ENCODE measurements at regions of chr1 and their contacts with region 1.

Region 1: GRCh38 chr1:145891587-145892485 is 6.2 kb upstream of the ANKRD35 start:
- DNase-seq: peak; percentile 62
- ATAC-seq: peak; percentile 78
- H3K4me3 Mint-ChIP-seq: no peak overlapping the region
- H3K27ac Mint-ChIP-seq: peak overlapping the region; percentile 40
- H3K4me1 Mint-ChIP-seq: peaks cover 1% of the 10 kb centered on the region
- H3K27me3 Mint-ChIP-seq: no peaks in the 10 kb centered on the region

Region 2: DNA sequence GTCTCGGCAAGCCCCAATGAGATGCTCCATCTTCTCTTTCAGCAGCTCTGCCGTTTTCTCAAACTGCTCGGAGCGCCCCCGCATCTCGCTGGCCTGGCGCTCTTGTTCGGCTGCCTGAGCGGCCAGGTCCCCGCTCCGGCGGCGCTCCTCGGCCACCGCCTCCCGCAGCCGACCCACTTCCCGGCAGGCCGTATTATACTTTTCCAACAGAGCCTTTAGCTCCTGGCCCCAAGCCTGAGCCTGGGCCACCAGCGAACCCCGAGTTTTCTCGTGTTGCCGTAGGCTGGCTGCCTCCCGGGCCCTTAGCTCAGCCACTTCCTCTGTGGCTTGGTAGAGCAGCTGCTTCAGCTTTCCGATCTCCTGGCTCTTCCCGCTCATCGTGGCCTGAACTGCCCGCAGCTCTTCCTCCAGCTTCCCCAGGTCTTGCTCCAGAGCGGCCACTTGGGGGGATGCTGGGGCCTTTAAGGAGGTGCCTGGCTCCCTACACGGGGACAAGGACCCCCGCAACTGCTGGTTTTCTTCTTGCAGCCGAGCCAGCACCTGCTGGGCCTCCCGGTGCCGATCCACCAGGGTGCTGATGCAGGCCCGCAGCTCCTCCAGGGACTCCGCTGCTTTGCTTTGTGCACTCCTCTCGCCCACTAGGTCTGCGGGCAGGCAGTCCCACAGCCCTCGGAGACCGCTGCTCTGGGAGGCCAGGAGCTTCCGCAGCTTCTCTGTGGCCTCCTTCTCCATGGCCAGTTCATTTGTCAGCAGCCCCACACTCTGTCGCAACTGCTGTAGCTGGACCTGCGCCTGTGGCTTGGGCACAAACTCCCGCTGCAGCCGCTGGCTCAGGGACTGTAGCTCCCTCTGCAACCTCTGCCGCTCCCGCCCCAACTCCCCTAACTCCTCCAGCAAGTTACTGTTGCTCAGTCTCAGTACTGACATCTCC is 19.6 kb before region 1 on chr1:
- CTCF ChIA-PET with region 1: interaction called, 12 read pairs
- POLR2A ChIA-PET with region 1: no interaction called
- DNase-seq: peak; percentile 59
- ATAC-seq: peak; percentile 92
- H3K4me3 Mint-ChIP-seq: peak overlapping the region; percentile 67
- H3K27ac Mint-ChIP-seq: peak overlapping the region; percentile 81
- H3K4me1 Mint-ChIP-seq: peaks cover 20% of the 10 kb centered on the region
- H3K27me3 Mint-ChIP-seq: peaks cover 17% of the 10 kb centered on the region

Region 3: DNA sequence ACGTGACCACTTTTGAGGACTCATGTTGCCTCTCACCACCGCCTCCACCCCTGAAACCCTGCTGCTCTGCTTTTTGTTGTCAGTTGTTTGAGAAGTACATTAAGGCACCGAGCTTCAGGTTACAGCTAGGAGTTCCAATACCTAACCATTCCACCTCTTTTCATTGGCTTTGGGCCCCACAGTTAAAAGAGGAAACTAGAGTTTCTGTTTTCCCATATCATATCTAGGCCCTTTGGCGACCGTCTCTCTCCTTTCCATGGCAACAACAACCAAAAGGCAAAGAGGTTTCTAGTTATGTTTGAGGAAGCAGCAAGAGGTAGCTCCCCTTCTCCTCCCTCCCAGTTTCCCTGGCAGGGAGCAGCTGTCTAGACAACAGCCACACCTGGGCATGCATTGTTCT is 12.1 kb before region 1 on chr1:
- CTCF ChIA-PET with region 1: interaction called, 22 read pairs
- POLR2A ChIA-PET with region 1: interaction called, 3 read pairs
- DNase-seq: no peak
- ATAC-seq: no peak
- H3K4me3 Mint-ChIP-seq: no peak overlapping the region
- H3K27ac Mint-ChIP-seq: no peak overlapping the region
- H3K4me1 Mint-ChIP-seq: peaks cover 1% of the 10 kb centered on the region
- H3K27me3 Mint-ChIP-seq: peaks cover 32% of the 10 kb centered on the region

Region 4: DNA sequence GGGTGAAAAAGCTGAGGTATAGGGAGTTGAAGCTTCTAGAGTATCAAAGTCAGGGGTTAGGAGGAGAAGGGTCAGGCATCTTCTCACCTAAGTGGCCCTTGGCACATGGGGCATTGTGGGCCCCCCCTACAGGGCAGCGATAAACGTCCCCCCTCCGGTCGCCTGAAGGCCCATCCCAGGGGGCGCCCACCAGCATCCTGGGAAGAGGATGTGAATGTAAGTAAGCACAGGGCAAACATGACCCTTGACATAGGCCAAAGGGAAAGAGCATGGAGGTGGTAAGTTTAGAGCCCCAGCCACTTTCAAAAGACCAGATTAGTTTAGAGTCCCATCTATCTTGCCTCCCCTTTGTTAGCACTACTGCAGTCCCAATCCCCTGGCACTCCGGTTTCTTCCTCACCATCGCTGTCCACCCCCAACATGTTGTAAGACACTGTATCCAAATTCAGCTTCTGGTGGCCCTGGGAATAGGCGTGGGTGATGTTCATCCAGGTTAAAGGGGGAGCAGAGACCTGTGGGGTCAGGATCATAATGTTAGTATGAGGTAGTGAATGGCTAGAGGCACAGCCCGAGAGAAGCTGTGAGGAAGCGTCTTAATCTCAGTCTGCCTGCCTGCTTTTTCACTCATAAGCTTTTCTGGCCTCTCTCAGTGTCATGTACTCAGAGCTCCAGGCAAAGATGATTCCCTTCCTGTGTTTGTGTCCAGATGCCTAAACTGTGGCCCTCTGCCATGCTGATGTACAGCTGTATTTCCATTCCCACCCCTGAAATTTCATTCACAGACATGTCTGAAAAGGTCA is 15.3 kb after region 1 on chr1:
- CTCF ChIA-PET with region 1: interaction called, 34 read pairs
- POLR2A ChIA-PET with region 1: interaction called, 3 read pairs
- DNase-seq: no peak
- ATAC-seq: no peak
- H3K4me3 Mint-ChIP-seq: no peak overlapping the region
- H3K27ac Mint-ChIP-seq: no peak overlapping the region
- H3K4me1 Mint-ChIP-seq: peaks cover 7% of the 10 kb centered on the region
- H3K27me3 Mint-ChIP-seq: no peaks in the 10 kb centered on the region

Region 5: GRCh38 chr1:145957443-145958319 is 65.8 kb after region 1 on chr1 and contains the start of gene LIX1L:
- CTCF ChIA-PET with region 1: interaction called, 19 read pairs
- POLR2A ChIA-PET with region 1: no interaction called
- DNase-seq: peak; percentile 98
- ATAC-seq: peak; percentile 93
- H3K4me3 Mint-ChIP-seq: peak within 1 kb of the TSS; percentile 85
- H3K27ac Mint-ChIP-seq: peak within 1 kb of the TSS; percentile 84
- H3K4me1 Mint-ChIP-seq: peaks cover 62% of the 10 kb centered on the region
- H3K27me3 Mint-ChIP-seq: no peaks in the 10 kb centered on the region
- total RNA-seq, gene LIX1L: 45.8 to 48.4 TPM

Region 6: GRCh38 chr1:146019231-146020057 is 127.6 kb after region 1 on chr1:
- CTCF ChIA-PET with region 1: interaction called, 16 read pairs
- POLR2A ChIA-PET with region 1: no interaction called
- DNase-seq: no peak
- ATAC-seq: peak; percentile 44
- H3K4me3 Mint-ChIP-seq: no peak overlapping the region
- H3K27ac Mint-ChIP-seq: no peak overlapping the region
- H3K4me1 Mint-ChIP-seq: peaks cover 6% of the 10 kb centered on the region
- H3K27me3 Mint-ChIP-seq: peaks cover 64% of the 10 kb centered on the region